T-cell (primary cell): ENCODE measurements at regions of chr18 and their contacts with region 1.

Region 1: DNA sequence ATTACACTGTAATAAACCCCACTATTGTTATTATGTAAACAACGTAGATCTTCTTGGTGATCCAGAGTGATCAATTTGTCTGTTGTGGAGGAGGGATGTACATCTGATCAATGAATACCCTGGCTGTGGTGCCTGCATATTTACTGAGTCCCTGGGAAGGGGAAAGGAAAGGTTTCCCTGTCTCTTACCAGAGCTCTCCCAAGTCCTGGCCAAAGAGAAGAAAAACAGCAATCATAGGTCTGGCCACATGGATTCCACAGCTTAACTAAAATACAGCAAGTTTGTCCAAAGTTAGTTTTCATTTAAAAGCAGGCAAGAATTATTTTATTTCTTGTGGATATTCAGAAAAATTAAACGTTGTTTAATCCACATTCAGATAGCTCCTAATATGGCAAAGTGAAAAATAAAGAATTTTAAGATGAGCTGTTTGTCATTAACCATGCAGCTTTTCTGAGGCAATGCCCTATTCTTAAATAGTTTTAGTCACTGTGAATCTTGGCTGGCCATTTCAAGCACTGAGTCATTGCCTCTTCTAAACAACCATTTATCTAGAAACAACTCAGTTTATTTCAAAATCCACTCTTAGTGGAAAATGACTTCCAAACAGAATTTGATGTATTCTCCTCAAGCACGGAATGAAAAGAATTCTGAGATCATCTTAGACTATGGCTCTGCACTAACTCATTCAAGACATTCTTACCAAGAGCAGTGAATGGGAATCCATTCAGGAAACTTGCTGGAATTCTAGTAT is 1004.4 kb upstream of the CDH2 start:
- DNase-seq: no peak
- ATAC-seq: no peak
- H3K4me3 ChIP-seq: no peak overlapping the region
- H3K4me3 Mint-ChIP-seq: no peak overlapping the region
- H3K27ac ChIP-seq: no peak overlapping the region
- H3K27ac Mint-ChIP-seq: no peak overlapping the region
- H3K4me1 ChIP-seq: no peaks in the 10 kb centered on the region
- H3K4me1 Mint-ChIP-seq: no peaks in the 10 kb centered on the region
- H3K27me3 ChIP-seq: no peaks in the 10 kb centered on the region
- H3K27me3 Mint-ChIP-seq: no peaks in the 10 kb centered on the region

Region 2: DNA sequence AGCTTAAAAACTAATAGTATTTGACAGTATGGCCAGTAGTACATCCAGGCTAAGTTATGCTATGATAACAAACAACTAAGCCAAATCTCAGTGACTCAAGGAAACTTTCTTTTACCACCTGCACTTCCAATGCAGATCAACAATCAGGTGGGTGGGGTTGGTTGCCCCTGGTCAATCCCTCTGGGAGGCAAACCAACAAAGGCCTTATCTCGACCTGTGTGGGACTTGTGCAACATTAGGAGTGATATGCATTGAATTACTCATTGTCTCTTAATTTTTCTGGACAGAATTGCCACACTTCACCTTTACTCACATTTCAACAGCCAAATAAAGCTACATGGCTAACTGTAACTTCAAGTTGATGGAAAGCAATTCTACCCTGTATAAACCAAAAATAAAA is 44.9 kb after region 1 on chr18:
- CTCF ChIA-PET with region 1: no interaction called
- POLR2A ChIA-PET with region 1: no interaction called
- DNase-seq: no peak
- ATAC-seq: no peak
- H3K4me3 ChIP-seq: no peak overlapping the region
- H3K4me3 Mint-ChIP-seq: no peak overlapping the region
- H3K27ac ChIP-seq: no peak overlapping the region
- H3K27ac Mint-ChIP-seq: no peak overlapping the region
- H3K4me1 ChIP-seq: no peaks in the 10 kb centered on the region
- H3K4me1 Mint-ChIP-seq: no peaks in the 10 kb centered on the region
- H3K27me3 ChIP-seq: no peaks in the 10 kb centered on the region
- H3K27me3 Mint-ChIP-seq: no peaks in the 10 kb centered on the region

Region 3: GRCh38 chr18:30039196-30039595 is 857.9 kb after region 1 on chr18:
- CTCF ChIA-PET with region 1: no interaction called
- POLR2A ChIA-PET with region 1: interaction called in 1 of 2 experiments, 11 read pairs
- DNase-seq: no peak
- ATAC-seq: no peak
- H3K4me3 ChIP-seq: no peak overlapping the region
- H3K4me3 Mint-ChIP-seq: no peak overlapping the region
- H3K27ac ChIP-seq: no peak overlapping the region
- H3K27ac Mint-ChIP-seq: no peak overlapping the region
- H3K4me1 ChIP-seq: no peaks in the 10 kb centered on the region
- H3K4me1 Mint-ChIP-seq: no peaks in the 10 kb centered on the region
- H3K27me3 ChIP-seq: no peaks in the 10 kb centered on the region
- H3K27me3 Mint-ChIP-seq: no peaks in the 10 kb centered on the region